GM13977 (cell line): ENCODE measurements at regions of chr15 and their contacts with region 1.

Region 1: DNA sequence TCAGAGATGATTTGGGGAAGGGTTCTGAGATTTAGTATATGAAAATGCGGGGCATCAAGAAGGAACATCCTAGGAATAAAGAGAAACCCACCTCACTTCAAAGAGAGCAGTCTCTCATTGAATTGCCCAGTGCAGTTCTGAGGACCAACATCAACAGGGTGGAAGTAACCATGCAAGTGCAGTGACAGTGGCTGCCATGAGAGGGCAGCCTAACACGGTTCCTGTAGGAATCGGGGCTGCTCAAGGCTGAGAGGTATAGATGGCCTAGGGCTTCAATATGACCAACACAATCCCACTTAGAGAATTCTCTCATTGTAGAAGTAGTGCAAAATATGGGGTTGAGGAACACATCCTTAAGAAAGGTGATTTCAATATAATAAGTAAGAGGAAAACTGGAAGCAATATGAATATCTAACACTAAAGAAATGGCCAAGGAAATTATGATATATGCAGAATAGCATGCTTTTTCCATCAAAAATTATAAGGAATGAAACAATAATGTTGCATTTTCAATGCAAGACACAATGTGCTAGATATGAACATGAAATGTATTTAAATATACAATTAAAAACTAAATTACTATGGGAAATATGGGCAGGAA is 51.1 kb upstream of the ARRDC4 start:
- DNase-seq: peak; percentile 64
- CTCF ChIP-seq: peak; percentile 82

Region 2: GRCh38 chr15:97177151-97177577 is 732.2 kb before region 1 on chr15:
- in situ Hi-C with region 1: no loop called
- DNase-seq: no peak
- CTCF ChIP-seq: no peak

Region 3: GRCh38 chr15:98421419-98422129 is 512.2 kb after region 1 on chr15:
- in situ Hi-C with region 1: loop called (anchors 25 kb)
- DNase-seq: peak; percentile 81
- CTCF ChIP-seq: peak; percentile 97

Region 4: DNA sequence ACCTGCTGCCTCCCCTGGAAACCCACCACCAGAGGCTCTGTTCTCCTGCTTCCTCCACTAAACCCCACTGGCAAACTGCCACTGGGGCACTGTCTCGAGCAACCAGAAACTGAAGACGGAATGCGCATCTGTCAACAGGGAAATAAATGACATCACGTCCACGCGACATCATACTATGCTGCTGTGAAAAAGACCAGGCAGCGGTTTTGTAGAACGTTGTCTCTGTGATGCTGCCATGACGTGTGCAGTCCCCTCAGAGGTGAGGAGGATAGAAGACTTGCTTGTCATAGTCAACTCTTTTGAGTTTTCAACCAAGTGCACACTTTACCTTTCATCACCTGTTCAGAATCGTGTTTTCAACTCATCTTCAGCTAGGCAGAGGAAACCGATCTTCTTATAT is 535.9 kb after region 1 on chr15:
- in situ Hi-C with region 1: no loop called
- DNase-seq: no peak
- CTCF ChIP-seq: no peak